BJ (cell line): ENCODE measurements at regions of chr7 and their contacts with region 1.

Region 1: GRCh38 chr7:44240983-44241510 is 40.3 kb downstream of the YKT6 start:
- DNase-seq: no peak
- H3K4me3 ChIP-seq: no peak overlapping the region
- H3K27me3 ChIP-seq: no peaks in the 10 kb centered on the region
- CTCF ChIP-seq: peak; percentile 87

Region 2: GRCh38 chr7:43856996-43857395 is 384.1 kb before region 1 on chr7:
- CTCF ChIA-PET with region 1: no interaction called
- POLR2A ChIA-PET with region 1: no interaction called
- DNase-seq: no peak
- H3K4me3 ChIP-seq: no peak overlapping the region
- H3K27me3 ChIP-seq: no peaks in the 10 kb centered on the region
- CTCF ChIP-seq: no peak

Region 3: DNA sequence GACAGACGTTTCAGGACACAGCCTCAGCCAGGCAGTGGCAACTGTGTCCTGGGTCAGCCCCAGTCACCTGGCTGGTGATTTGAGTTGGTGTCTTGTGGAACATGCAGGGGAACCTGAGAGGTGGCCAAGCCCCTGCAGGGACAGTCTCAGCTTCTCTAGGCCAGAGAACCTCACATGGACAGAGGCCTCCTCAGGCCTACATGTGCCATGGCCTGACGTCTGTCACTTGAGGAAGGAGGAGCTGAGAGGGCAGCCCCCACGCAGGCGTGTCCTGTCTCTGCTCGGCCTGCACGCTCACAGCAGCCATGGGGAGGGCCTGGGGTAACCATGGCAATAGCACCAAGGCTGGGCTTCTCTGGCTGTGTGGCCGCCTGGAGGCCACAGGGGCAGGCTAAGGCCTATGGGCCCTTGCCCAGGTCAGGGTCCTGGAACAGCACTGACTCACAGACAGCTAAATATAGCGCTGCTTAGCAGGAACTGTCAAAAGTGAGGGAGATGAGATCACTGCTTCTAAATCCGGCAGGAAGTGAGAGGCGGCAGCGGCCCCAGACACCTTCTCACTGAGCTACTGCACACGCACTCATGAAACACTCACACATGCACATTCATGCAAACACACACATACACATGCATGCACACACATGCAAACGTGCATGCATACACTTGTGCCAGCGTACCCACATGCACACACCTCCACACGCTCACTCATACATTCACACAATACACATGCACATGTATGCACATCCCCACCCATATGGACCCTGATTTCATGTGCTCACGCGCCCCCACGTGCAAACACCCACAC is 16.8 kb after region 1 on chr7:
- CTCF ChIA-PET with region 1: interaction called, 25 read pairs
- POLR2A ChIA-PET with region 1: no interaction called
- DNase-seq: peak; percentile 26
- H3K4me3 ChIP-seq: no peak overlapping the region
- H3K27me3 ChIP-seq: peaks cover 1% of the 10 kb centered on the region; the same call in 1 of the 2 replicates
- CTCF ChIP-seq: no peak

Region 4: GRCh38 chr7:44460325-44460724 is 219.3 kb after region 1 on chr7:
- CTCF ChIA-PET with region 1: interaction called, 16 read pairs
- POLR2A ChIA-PET with region 1: no interaction called
- DNase-seq: no peak
- H3K4me3 ChIP-seq: no peak overlapping the region
- H3K27me3 ChIP-seq: no peaks in the 10 kb centered on the region
- CTCF ChIP-seq: no peak

Region 5: GRCh38 chr7:44477063-44477830 is 236.2 kb after region 1 on chr7:
- CTCF ChIA-PET with region 1: interaction called, 19 read pairs
- POLR2A ChIA-PET with region 1: no interaction called
- DNase-seq: no peak
- H3K4me3 ChIP-seq: no peak overlapping the region
- H3K27me3 ChIP-seq: no peaks in the 10 kb centered on the region
- CTCF ChIP-seq: peak; percentile 97

Region 6: DNA sequence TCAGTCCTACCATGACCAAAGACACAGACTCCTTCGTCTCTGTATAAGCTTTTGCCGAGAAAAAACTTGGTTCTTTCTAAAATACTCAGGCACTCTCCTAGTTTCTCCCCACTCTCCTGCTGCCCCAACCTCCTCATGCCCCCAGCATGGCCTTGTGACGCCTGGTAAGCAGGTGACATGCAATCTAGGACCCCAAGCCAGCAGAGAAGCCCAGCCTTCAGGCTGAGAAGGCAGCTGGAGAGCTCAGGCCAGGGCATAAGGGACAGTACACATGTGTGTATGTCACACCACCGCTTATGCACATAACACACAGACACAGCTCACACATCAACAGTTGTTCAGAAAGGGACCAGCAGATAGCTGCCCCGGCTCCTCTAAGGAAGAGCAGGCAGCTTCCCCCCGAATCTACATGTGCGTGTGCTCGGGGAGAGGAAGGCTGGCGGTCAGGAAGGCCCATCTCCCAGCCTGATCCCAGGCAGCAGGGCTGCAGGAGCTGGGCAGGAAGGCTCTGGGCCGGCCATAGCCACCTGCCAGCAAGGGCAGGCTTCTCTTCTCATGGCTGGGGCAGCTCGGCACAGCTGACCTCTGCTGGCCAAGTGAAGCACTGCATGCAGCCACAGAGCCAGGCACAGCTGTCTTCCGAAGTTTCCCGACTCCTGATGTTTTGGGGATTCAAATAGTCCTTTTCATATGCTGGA is 324.2 kb after region 1 on chr7:
- CTCF ChIA-PET with region 1: interaction called, 39 read pairs
- POLR2A ChIA-PET with region 1: no interaction called
- DNase-seq: no peak
- H3K4me3 ChIP-seq: no peak overlapping the region
- H3K27me3 ChIP-seq: no peaks in the 10 kb centered on the region
- CTCF ChIP-seq: peak; percentile 98